CD4-positive, alpha-beta memory T cell (primary cell): ENCODE measurements at regions of chr17 and their contacts with region 1.

Region 1: GRCh38 chr17:78341559-78342448 is 18.1 kb downstream of the SOCS3 start:
- DNase-seq: no peak
- H3K4me3 ChIP-seq: no peak overlapping the region
- H3K4me3 Mint-ChIP-seq: peak overlapping the region in 3 of 8 donors; percentile 12 to 70 (median 67)
- H3K27ac ChIP-seq: peak overlapping the region; percentile 61
- H3K27ac Mint-ChIP-seq: peak overlapping the region in 4 of 7 donors; percentile 27 to 98 (median 66)
- H3K4me1 ChIP-seq: peaks cover 83% of the 10 kb centered on the region
- H3K4me1 Mint-ChIP-seq: peaks cover 55 to 88% (median 68%) of the 10 kb centered on the region in 4 donors
- H3K27me3 ChIP-seq: no peaks in the 10 kb centered on the region
- H3K27me3 Mint-ChIP-seq: no peaks in the 10 kb centered on the region

Region 2: DNA sequence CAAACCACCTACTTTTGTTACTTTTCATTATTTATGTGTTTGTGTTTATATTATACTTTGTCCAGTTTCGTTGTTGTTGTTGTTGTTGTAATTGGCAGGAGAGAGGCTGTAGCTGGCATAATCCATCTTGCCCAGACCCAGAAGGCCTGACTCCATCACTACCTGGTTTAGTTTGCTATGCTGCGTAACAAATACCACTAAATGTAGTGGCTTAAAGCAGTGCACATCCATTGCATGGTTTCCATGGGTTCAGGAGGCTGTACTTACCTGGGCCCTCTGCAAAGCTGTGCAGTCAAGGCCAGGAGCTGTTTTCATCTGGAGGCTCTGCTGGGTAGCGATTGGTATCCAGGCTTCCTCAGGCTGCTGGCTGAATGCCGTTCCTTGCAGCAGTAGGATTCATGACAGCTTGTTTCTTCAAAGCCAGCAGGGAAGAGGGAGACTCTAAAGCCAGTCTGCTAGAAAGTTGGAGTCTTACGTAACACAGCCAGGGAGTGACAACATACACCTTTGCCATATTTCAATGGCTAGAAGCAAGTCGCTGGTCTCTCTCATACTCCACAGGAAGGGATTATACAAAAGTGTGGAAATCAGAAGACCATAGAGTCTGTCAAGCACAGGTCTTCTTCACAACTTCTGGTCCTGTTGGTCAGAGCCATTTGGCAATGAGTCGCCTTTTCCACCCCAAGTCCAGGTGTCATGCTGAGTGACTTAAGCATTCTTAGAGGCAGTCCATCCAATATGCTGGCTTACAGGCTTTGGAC is 342.2 kb before region 1 on chr17:
- CTCF ChIA-PET with region 1: no interaction called
- POLR2A ChIA-PET with region 1: no interaction called
- intact Hi-C with region 1: no loop called
- DNase-seq: no peak
- H3K4me3 ChIP-seq: no peak overlapping the region
- H3K4me3 Mint-ChIP-seq: peak overlapping the region in 2 of 8 donors; percentile 24 to 50
- H3K27ac ChIP-seq: no peak overlapping the region
- H3K27ac Mint-ChIP-seq: peak overlapping the region in 2 of 7 donors; percentile 9 to 25
- H3K4me1 ChIP-seq: peaks cover 41% of the 10 kb centered on the region
- H3K4me1 Mint-ChIP-seq: peaks cover 60 to 95% (median 78%) of the 10 kb centered on the region in 4 donors
- H3K27me3 ChIP-seq: no peaks in the 10 kb centered on the region
- H3K27me3 Mint-ChIP-seq: no peaks in the 10 kb centered on the region

Region 3: GRCh38 chr17:78289802-78290363 is 51.9 kb before region 1 on chr17:
- CTCF ChIA-PET with region 1: interaction called, 5 read pairs
- POLR2A ChIA-PET with region 1: no interaction called
- intact Hi-C with region 1: loop called (anchors 5 kb)
- DNase-seq: peak; percentile 72 to 78 (median 74)
- H3K4me3 ChIP-seq: no peak overlapping the region
- H3K4me3 Mint-ChIP-seq: no peak overlapping the region
- H3K27ac ChIP-seq: no peak overlapping the region
- H3K27ac Mint-ChIP-seq: no peak overlapping the region
- H3K4me1 ChIP-seq: peaks cover 8% of the 10 kb centered on the region
- H3K4me1 Mint-ChIP-seq: peaks cover 0 to 7% (median 1%) of the 10 kb centered on the region in 4 donors
- H3K27me3 ChIP-seq: no peaks in the 10 kb centered on the region
- H3K27me3 Mint-ChIP-seq: no peaks in the 10 kb centered on the region

Region 4: GRCh38 chr17:78313735-78314648 is 27.8 kb before region 1 on chr17:
- CTCF ChIA-PET with region 1: interaction called, 7 read pairs
- POLR2A ChIA-PET with region 1: interaction called, 20 read pairs
- intact Hi-C with region 1: loop called (anchors 2 kb)
- DNase-seq: peak; percentile 68 to 71 (median 70)
- H3K4me3 ChIP-seq: peak overlapping the region in 1 of 2 donors; percentile 50
- H3K4me3 Mint-ChIP-seq: peak overlapping the region; percentile 73 to 91 (median 79)
- H3K27ac ChIP-seq: peak overlapping the region; percentile 18
- H3K27ac Mint-ChIP-seq: peak overlapping the region in 6 of 7 donors; percentile 11 to 94 (median 81)
- H3K4me1 ChIP-seq: peaks cover 44% of the 10 kb centered on the region
- H3K4me1 Mint-ChIP-seq: peaks cover 18 to 56% (median 38%) of the 10 kb centered on the region in 4 donors
- H3K27me3 ChIP-seq: no peaks in the 10 kb centered on the region
- H3K27me3 Mint-ChIP-seq: no peaks in the 10 kb centered on the region

Region 5: GRCh38 chr17:78324391-78325075 is 17.3 kb before region 1 on chr17:
- CTCF ChIA-PET with region 1: interaction called, 4 read pairs
- POLR2A ChIA-PET with region 1: interaction called, 15 read pairs
- intact Hi-C with region 1: no loop called
- DNase-seq: no peak
- H3K4me3 ChIP-seq: no peak overlapping the region
- H3K4me3 Mint-ChIP-seq: peak overlapping the region in 7 of 8 donors; percentile 48 to 73 (median 65)
- H3K27ac ChIP-seq: no peak overlapping the region
- H3K27ac Mint-ChIP-seq: peak overlapping the region; percentile 69 to 93 (median 80)
- H3K4me1 ChIP-seq: peaks cover 25% of the 10 kb centered on the region
- H3K4me1 Mint-ChIP-seq: peaks cover 13 to 31% (median 18%) of the 10 kb centered on the region in 4 donors
- H3K27me3 ChIP-seq: no peaks in the 10 kb centered on the region
- H3K27me3 Mint-ChIP-seq: no peaks in the 10 kb centered on the region

Region 6: GRCh38 chr17:78497115-78497540 is 155.3 kb after region 1 on chr17:
- CTCF ChIA-PET with region 1: no interaction called
- POLR2A ChIA-PET with region 1: no interaction called
- intact Hi-C with region 1: no loop called
- DNase-seq: peak; percentile 47 to 63 (median 58)
- H3K4me3 ChIP-seq: no peak overlapping the region
- H3K4me3 Mint-ChIP-seq: no peak overlapping the region
- H3K27ac ChIP-seq: no peak overlapping the region
- H3K27ac Mint-ChIP-seq: no peak overlapping the region
- H3K4me1 ChIP-seq: no peaks in the 10 kb centered on the region
- H3K4me1 Mint-ChIP-seq: no peaks in the 10 kb centered on the region
- H3K27me3 ChIP-seq: no peaks in the 10 kb centered on the region
- H3K27me3 Mint-ChIP-seq: no peaks in the 10 kb centered on the region